ENCODE measurements at regions of chr12 and their contacts with region 1.

Region 1: DNA sequence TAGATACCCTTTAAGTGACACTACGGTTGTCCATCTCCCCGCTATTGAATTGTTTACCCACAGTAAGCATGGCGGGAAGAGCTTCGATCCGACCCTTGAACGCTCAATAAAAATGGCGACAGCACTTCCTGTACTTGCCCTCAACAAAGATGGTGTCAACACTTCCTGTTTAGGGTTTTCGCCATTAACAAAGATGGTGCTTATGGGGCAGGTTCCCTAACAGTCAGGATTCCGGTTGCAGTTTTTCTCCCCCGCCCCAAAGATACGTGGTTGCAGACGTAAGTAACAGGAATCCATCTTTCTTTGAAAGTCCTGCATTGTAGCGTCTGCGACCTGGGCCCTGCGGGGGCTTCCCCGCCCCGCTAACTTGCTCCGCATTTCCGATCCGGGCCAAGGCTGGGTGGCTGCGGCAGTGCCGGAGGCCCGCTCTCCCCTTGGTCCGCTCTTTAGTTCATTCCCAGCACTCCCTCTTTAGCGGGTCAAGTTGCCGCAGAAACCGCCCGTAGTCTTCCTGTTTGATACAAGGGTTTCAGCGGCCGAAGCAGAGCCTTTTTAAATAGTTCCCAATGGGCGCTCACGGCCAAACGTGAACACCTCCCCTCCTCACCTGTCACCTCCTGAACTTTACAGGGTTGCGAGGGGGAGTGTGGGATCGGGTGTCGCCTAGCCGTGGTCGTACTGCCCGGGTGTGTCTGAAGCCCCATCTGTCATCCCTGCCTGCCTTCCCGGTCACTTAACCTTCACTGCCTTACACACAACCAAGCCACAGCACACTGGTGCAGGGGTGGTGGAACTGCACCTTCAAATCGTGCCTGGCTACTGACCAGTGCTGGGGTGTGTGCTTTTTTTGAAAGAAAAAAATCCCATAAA is at the start of gene CRADD:
- DNase-seq: peak; percentile 78
- ATAC-seq: peak; percentile 89
- total RNA-seq, gene CRADD: 30.4 TPM

Region 2: GRCh38 chr12:93742110-93742934 is 64.9 kb after region 1 on chr12:
- intact Hi-C with region 1: loop called (anchors 2 kb)
- DNase-seq: peak; percentile 87
- ATAC-seq: peak; percentile 94